Right cardiac atrium (tissue), 5 donors: ENCODE measurements at regions of chr22 and their contacts with region 1.

Region 1: GRCh38 chr22:44819971-44820631 is 67.7 kb downstream of the ARHGAP8 start:
- DNase-seq: peak in 2 of 3 donors; percentile 20 to 52
- ATAC-seq: no peak
- H3K4me3 ChIP-seq: no peak overlapping the region
- H3K27ac ChIP-seq: no peak overlapping the region
- H3K4me1 ChIP-seq: no peaks in the 10 kb centered on the region
- H3K27me3 ChIP-seq: no peaks in the 10 kb centered on the region

Region 2: GRCh38 chr22:44639001-44639760 is 180.9 kb before region 1 on chr22:
- intact Hi-C with region 1: no loop called
- DNase-seq: peak in 2 of 3 donors; percentile 65 to 83
- ATAC-seq: peak; percentile 72 to 78
- H3K4me3 ChIP-seq: no peak overlapping the region
- H3K27ac ChIP-seq: peak overlapping the region; percentile 25
- H3K4me1 ChIP-seq: no peaks in the 10 kb centered on the region
- H3K27me3 ChIP-seq: no peaks in the 10 kb centered on the region

Region 3: DNA sequence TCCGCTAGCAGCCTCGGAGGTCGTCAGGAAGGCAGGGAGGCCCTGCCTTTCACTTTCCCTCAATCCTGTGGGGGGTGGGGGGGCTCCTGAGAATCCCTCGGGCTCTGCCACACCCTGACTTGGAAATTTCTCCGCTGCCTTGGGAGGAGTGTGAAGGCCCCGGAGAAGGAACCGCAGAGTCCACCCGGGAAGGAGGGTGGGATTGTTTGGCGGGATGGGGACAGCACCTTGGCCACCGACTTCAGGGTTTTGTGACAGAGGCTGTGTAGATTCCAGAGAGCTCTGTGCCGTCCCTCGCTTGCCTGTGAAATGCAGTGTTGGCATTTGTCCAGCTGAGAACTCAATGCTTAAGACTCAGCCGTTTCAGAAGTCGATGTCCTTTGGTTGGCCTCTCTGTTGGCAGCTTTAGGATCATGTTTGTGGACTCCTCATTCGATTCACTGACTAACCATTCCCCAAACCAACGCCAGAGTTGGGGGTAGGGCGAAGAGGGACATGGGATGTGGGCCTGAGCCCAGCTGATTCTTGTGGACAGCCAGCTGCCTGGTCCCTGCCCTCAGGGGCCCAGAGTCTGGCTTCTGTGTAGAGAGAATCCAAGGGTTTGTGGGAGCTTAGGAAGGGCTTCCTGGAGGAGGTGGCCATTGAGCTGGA is 66.4 kb before region 1 on chr22:
- intact Hi-C with region 1: no loop called
- DNase-seq: peak in 1 of 3 donors; percentile 74
- ATAC-seq: peak; percentile 40 to 45
- H3K4me3 ChIP-seq: no peak overlapping the region
- H3K27ac ChIP-seq: no peak overlapping the region
- H3K4me1 ChIP-seq: peaks cover 3% of the 10 kb centered on the region
- H3K27me3 ChIP-seq: no peaks in the 10 kb centered on the region

Region 4: GRCh38 chr22:44889258-44889878 is 69.3 kb after region 1 on chr22:
- intact Hi-C with region 1: no loop called
- DNase-seq: no peak
- ATAC-seq: peak in 1 of 2 donors; percentile 27
- H3K4me3 ChIP-seq: no peak overlapping the region
- H3K27ac ChIP-seq: no peak overlapping the region
- H3K4me1 ChIP-seq: no peaks in the 10 kb centered on the region
- H3K27me3 ChIP-seq: no peaks in the 10 kb centered on the region

Region 5: DNA sequence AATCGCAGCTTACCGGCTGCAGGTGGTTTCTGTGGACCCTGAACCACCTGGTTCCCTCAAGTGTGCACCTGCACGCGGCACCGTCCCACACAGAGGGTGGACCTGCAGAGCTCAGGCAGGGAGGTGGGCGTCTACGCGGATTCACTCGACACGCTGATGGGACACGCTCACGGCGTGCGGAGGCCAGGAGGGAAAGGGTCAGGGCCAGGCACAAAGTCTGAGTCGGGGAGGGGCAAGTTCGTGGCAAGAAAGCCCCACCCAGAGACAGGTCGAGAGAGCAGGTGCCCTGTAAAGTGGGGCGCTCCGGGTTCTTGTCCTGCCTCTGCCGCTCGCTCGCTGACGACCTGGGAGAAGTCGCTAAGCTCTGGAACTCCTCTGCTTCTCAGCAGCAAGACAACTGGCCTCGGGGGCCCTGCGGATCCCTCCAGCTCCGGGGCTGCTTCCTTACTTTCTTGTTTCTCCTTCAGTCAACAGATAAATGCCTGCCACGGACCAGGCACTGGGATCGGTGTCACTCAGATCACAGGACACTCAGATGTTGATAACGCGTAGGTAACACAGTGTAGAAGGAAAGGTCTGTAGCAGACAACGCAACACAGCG is 271.3 kb after region 1 on chr22:
- intact Hi-C with region 1: loop called in 3 of 4 experiments (anchors 5 to 10 kb)
- DNase-seq: no peak
- ATAC-seq: no peak
- H3K4me3 ChIP-seq: no peak overlapping the region
- H3K27ac ChIP-seq: no peak overlapping the region
- H3K4me1 ChIP-seq: no peaks in the 10 kb centered on the region
- H3K27me3 ChIP-seq: no peaks in the 10 kb centered on the region

Region 6: DNA sequence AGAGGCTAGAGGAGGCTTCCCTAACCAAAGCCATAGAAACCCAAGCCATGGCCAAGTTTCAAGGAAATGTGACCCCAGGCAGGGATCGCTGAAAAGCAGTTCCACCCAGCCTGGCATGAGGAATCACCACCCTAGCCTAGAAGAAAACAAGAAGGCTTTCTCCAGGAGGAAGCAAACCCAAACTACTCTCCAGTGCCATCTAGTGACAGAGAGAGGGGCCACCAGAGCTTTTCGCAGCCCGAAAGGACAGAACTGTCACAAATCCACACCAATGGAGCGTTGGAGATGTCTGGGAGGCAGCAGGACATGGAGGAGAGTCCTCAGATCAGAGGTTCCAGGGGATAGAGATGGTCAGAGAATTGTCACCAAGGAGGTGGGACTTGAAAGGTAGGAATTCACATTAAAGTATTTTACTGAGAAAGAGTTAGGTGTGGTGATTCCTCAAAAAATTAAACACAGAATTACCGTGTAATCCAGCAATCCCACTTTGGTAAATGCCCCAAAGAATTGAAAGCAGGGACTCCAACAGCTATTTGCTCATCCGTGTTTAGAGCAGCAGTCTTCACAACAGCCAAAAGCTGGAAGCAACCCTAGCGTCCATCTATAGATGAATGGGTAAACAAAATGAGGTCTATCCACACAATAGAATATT is 276.3 kb after region 1 on chr22:
- intact Hi-C with region 1: loop called (anchors 5 to 10 kb)
- DNase-seq: peak in 1 of 3 donors; percentile 62
- ATAC-seq: peak; percentile 67 to 71
- H3K4me3 ChIP-seq: no peak overlapping the region
- H3K27ac ChIP-seq: no peak overlapping the region
- H3K4me1 ChIP-seq: no peaks in the 10 kb centered on the region
- H3K27me3 ChIP-seq: no peaks in the 10 kb centered on the region

Region 7: GRCh38 chr22:45101515-45102227 is 281.6 kb after region 1 on chr22:
- intact Hi-C with region 1: loop called in 2 of 4 experiments (anchors 5 to 10 kb)
- DNase-seq: peak; percentile 43 to 73 (median 70)
- ATAC-seq: peak; percentile 55 to 60
- H3K4me3 ChIP-seq: no peak overlapping the region
- H3K27ac ChIP-seq: no peak overlapping the region
- H3K4me1 ChIP-seq: no peaks in the 10 kb centered on the region
- H3K27me3 ChIP-seq: no peaks in the 10 kb centered on the region